ENCODE measurements at regions of chr6 and their contacts with region 1.

Region 1: GRCh38 chr6:24283043-24283985 is 74.5 kb downstream of the DCDC2 start:
- DNase-seq: peak in 6 of 9 donors; percentile 13 to 50 (median 42)
- ATAC-seq: peak; percentile 81
- H3K4me3 ChIP-seq: no peak overlapping the region
- H3K4me3 Mint-ChIP-seq: peak overlapping the region; percentile 21 to 77 (median 50)
- H3K27ac ChIP-seq: no peak overlapping the region
- H3K27ac Mint-ChIP-seq: no peak overlapping the region
- H3K4me1 ChIP-seq: no peaks in the 10 kb centered on the region
- H3K4me1 Mint-ChIP-seq: peaks cover 0 to 7% (median 6%) of the 10 kb centered on the region in 7 donors
- H3K27me3 ChIP-seq: no peaks in the 10 kb centered on the region
- H3K27me3 Mint-ChIP-seq: peaks cover 4 to 14% (median 9%) of the 10 kb centered on the region in 5 donors

Region 2: GRCh38 chr6:24359640-24360454 is 76.5 kb after region 1 on chr6:
- CTCF ChIA-PET with region 1: interaction called, 4 read pairs
- POLR2A ChIA-PET with region 1: no interaction called
- intact Hi-C with region 1: loop called (anchors 1 to 5 kb)
- DNase-seq: peak; percentile 67 to 86 (median 81)
- ATAC-seq: peak; percentile 97
- H3K4me3 ChIP-seq: peak overlapping the region; percentile 50
- H3K4me3 Mint-ChIP-seq: peak overlapping the region; percentile 79 to 89 (median 87)
- H3K27ac ChIP-seq: peak overlapping the region; percentile 9
- H3K27ac Mint-ChIP-seq: peak overlapping the region in 8 of 9 donors; percentile 66 to 96 (median 82)
- H3K4me1 ChIP-seq: peaks cover 7 to 11% of the 10 kb centered on the region in 2 donors
- H3K4me1 Mint-ChIP-seq: peaks cover 10 to 39% (median 28%) of the 10 kb centered on the region in 7 donors
- H3K27me3 ChIP-seq: no peaks in the 10 kb centered on the region
- H3K27me3 Mint-ChIP-seq: peaks cover 0 to 57% (median 5%) of the 10 kb centered on the region in 5 donors